Right ventricle myocardium inferior (tissue), 1 donor: ENCODE measurements at regions of chr1 and their contacts with region 1.

Region 1: DNA sequence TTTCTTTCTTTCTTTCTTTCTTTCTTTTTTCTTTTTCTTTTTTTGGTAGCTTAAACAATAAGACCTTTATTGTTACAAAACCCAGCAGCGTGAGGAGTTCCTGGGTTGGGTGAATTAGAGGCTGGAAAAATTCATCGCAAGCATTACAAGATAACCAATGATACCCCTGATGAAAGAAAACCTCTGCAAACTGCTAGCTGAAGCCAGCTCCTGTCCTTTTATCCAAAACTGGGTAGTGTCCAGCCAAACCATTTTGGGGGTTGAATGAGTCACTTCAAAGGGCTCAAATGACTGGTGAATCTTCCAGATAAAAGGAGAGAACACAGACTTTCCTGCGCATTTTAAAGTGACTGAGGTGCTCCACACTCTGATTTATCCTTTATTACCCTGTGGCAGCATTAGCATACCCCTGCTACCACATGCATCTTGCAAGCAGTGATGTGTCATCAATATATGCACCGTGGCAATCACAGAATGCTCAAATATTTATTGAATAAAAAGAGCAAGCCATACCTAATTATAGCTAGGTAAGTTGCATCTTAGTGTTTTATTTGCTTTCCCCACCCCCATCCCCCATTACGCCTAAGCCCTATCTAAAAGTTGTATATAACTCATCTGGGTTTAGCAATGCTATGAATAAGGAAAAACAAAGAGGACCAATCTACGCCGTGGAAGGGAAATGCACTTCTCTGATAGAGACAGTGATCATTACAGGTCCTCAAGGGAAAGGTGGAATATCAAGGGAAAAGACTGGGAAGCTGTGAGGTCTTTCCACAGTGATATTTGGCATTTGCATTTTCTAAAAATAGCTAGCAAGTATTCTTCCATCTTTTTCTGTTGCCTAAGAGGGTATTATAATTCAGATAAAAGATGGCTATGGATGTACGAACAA is 32.4 kb upstream of the CEP350 start:
- DNase-seq: no peak
- ATAC-seq: no peak

Region 2: GRCh38 chr1:179984942-179985341 is 62.7 kb after region 1 on chr1:
- intact Hi-C with region 1: loop called (anchors 5 kb)
- DNase-seq: no peak
- ATAC-seq: no peak

Region 3: GRCh38 chr1:180027949-180028445 is 105.8 kb after region 1 on chr1:
- intact Hi-C with region 1: loop called (anchors 5 kb)
- DNase-seq: no peak
- ATAC-seq: no peak

Region 4: GRCh38 chr1:180070286-180070685 is 148.1 kb after region 1 on chr1:
- intact Hi-C with region 1: loop called (anchors 10 kb)
- DNase-seq: no peak
- ATAC-seq: no peak